A673 (cell line): ENCODE measurements at regions of chr14 and their contacts with region 1.

Region 1: GRCh38 chr14:82710267-82710841 is 1176.7 kb upstream of the SEL1L start:
- DNase-seq: peak; percentile 87
- H3K4me3 ChIP-seq: no peak overlapping the region
- H3K27ac ChIP-seq: no peak overlapping the region
- H3K4me1 ChIP-seq: no peaks in the 10 kb centered on the region
- H3K27me3 ChIP-seq: no peaks in the 10 kb centered on the region
- CTCF ChIP-seq: peak; percentile 93

Region 2: DNA sequence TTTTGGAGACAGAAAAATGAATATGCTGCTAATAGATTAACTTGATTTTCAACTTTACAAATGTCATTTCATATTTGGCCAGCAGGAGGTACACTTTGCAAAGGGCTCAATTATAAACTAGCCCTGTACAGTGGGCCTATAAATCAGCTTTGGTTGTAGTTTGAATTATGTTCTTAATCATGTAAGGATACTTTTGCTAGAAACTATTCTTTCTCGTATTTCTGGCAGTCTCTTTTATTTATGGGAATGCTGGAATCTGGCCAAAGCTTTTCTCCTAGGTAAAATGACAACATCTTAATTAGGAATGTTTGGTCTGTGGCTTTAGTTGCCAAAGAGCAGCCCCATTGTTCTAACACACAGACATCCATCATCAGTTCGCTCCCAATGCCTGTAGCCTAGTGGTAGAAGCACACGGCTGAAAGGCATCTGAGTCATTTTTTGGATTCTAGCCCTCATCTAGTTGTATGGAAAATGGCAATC is 145.6 kb after region 1 on chr14:
- CTCF ChIA-PET with region 1: no interaction called
- POLR2A ChIA-PET with region 1: no interaction called
- intact Hi-C with region 1: loop called (anchors 5 kb)
- DNase-seq: peak; percentile 74
- H3K4me3 ChIP-seq: no peak overlapping the region
- H3K27ac ChIP-seq: no peak overlapping the region
- H3K4me1 ChIP-seq: peaks cover 27% of the 10 kb centered on the region
- H3K27me3 ChIP-seq: no peaks in the 10 kb centered on the region
- CTCF ChIP-seq: peak; percentile 74

Region 3: DNA sequence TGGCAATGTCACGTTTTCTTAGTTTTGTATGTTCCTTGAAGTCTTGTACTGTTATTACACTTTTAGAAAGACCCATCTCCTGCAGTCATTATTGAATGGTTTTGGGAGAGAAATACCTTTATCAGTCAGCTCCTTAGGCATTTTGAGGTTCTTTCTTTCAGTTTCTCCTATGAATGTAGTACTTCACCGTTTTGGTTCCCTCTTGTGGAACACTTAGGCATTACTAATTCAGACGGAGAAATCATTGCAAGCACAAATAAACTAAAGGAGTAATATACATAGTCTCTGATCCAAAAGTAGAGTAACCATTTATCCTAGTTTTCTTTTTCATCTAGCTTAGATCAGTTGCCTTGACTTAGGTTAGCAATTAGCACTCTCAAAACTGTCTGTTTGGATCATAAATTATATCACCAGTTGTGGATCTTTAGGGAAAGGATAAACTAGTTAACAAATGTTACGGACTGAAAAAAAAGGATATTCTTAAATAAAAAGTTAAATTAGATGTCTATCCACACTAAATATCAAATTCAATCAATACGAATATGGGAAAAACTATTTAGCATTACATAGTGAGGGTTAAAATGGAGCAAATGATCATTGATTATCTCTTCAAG is 361.6 kb after region 1 on chr14:
- CTCF ChIA-PET with region 1: no interaction called
- POLR2A ChIA-PET with region 1: no interaction called
- intact Hi-C with region 1: loop called (anchors 1 kb)
- DNase-seq: peak; percentile 79
- H3K4me3 ChIP-seq: no peak overlapping the region
- H3K27ac ChIP-seq: no peak overlapping the region
- H3K4me1 ChIP-seq: no peaks in the 10 kb centered on the region
- H3K27me3 ChIP-seq: no peaks in the 10 kb centered on the region
- CTCF ChIP-seq: peak; percentile 69

Region 4: DNA sequence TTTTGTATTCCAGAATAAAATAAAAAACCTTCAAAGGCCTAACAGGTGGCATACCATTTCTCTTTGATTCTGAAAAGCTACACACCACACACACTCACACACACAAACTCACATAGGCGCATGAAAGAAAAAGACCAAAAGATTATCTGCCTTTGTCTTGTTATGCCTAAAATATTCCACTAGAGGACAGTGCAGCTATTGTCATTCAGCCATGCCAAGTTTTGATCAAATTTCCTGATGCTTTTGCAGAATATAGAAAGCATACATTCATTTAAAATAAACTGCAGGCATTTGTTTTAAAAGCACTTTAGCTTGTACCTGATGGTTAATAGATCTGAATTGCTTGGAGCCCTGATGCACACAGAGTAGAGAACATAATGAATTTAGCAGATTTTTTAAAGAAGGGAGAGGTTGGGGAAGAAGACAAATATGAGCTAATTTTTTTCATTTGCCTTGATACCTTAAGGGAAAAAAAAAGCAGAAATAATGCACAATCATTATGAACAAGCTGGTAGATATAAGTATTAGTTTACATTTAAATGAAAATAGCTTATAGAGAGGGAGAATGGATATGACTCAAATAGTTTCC is 590.2 kb after region 1 on chr14:
- CTCF ChIA-PET with region 1: no interaction called
- POLR2A ChIA-PET with region 1: no interaction called
- intact Hi-C with region 1: loop called (anchors 2 kb)
- DNase-seq: peak; percentile 80
- H3K4me3 ChIP-seq: no peak overlapping the region
- H3K27ac ChIP-seq: peak overlapping the region; percentile 50
- H3K4me1 ChIP-seq: peaks cover 42% of the 10 kb centered on the region
- H3K27me3 ChIP-seq: no peaks in the 10 kb centered on the region
- CTCF ChIP-seq: peak; percentile 88

Region 5: DNA sequence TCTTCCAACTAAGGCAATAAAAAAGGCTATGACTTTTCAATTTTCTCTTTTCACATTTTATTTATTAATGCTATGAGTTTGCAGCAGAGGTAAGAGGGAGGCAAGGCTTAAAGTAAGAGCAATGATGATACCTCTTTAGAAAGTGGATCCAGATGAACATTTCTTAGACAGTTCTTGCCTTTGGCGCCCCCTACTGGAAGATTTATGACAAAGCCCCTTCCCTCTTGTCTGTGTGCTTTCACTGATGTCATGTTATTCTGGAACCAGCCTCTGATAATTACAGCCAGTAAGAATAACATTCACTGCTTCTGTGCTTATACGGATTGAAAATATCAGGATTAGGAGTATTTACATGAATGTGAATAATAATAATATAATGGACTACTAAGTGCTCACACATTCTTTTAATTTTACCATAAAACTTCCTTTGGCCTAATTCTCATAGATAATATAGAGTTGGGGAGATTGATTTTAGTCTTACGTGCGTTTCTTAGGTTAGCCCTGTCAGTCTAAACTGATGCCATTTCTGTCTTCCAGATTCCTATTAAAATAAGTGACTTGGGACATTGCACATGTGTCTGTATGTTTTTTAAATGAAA is 753.2 kb after region 1 on chr14:
- CTCF ChIA-PET with region 1: no interaction called
- POLR2A ChIA-PET with region 1: no interaction called
- intact Hi-C with region 1: loop called (anchors 5 kb)
- DNase-seq: peak; percentile 87
- H3K4me3 ChIP-seq: no peak overlapping the region
- H3K27ac ChIP-seq: no peak overlapping the region
- H3K4me1 ChIP-seq: peaks cover 33% of the 10 kb centered on the region
- H3K27me3 ChIP-seq: no peaks in the 10 kb centered on the region
- CTCF ChIP-seq: peak; percentile 89